Activated CD4-positive, alpha-beta T cell treated with anti-CD3 and anti-CD28 coated beads, Interleukin-2, amount 10 ng/mL, durations not matched to agents 7 days and 5 days (primary cell): ENCODE measurements at regions of chr20 and their contacts with region 1.

Region 1: DNA sequence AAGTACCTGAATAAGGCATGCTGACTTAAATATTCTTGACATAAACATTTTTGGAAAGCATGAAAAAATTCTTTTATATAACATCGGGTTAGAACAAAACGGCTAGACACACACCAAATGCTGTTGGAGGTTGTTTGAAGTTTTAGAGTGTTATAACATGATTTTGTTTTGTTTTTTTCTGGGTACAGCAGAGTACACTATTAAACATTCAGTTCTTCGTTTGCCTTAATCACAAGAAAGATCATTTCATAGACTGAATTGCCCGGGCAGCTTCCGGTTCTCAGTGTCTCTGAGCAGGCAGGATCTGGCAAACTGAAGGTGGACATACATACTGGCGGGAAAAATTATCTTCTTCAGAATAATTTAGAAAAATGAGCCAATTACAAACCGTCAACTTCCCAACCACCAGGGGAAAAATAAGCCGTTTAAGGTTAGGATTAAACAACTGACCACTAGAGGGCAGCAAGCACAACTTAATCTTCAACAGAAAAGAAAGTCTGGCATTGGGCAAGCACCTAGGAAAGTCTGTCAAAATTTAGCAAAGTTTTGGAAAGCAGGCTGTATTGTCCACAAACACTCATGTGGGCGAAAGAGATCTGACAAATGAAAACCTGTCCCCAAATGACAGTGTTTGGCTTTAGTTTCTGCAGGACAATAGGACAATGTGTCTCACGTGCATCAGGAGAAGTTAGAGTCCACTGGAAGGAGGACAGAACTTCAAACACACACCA is 15.0 kb downstream of the ZNF217 start:
- DNase-seq: peak; percentile 83
- H3K4me3 Mint-ChIP-seq: peak overlapping the region; percentile 72
- H3K27ac Mint-ChIP-seq: peak overlapping the region; percentile 70
- H3K4me1 Mint-ChIP-seq: peaks cover 93% of the 10 kb centered on the region
- H3K27me3 Mint-ChIP-seq: no peaks in the 10 kb centered on the region

Region 2: GRCh38 chr20:53555081-53555480 is 23.6 kb before region 1 on chr20:
- CTCF ChIA-PET with region 1: no interaction called
- POLR2A ChIA-PET with region 1: no interaction called
- DNase-seq: no peak
- H3K4me3 Mint-ChIP-seq: no peak overlapping the region
- H3K27ac Mint-ChIP-seq: no peak overlapping the region
- H3K4me1 Mint-ChIP-seq: no peaks in the 10 kb centered on the region
- H3K27me3 Mint-ChIP-seq: no peaks in the 10 kb centered on the region

Region 3: DNA sequence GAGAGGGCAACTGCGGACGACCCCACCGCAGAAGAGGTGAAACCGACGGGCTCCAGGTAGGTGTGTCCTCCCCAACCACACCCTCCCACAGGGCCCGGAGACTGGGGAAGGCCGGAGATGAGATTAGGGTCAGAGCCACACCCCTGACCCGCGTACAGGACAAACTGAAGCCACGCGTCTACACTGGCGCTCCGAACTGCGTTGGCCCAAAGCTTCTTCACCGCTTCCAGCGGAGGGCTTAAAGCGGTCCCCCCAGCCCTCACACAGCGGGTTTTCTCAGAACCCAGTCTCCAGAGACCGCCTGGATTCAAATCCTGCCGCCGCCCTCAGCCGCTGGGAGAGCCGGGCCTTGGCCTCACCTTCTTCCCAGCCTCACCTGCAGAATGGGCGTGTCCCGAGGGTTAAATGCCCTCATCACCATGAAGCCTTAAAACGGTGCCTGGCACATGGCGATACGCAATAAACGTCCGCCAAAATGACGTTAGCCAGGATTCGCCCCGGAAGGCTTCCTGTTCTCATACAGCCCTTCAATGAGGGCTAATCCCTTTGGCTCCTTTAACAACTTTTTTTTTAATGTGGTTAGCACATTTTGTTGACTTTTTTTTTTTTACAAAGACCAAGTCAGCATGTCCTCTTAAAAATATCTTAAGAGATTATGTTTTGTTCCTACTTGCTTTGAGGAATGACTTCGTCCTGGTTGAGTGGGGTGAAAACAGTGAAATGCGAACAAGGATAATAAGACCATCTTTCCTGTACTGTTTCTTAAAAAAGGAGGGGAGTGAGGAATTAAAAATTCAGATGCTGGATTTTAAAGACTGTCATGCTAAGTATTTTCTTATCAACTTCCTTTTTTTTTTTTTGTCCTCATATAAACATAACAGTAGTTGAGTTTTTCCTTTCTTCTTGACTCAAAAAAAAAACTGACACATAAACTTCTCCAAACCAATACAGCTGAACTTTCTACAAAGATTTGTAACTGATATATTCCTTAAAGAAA is 30.1 kb after region 1 on chr20:
- CTCF ChIA-PET with region 1: no interaction called
- POLR2A ChIA-PET with region 1: no interaction called
- DNase-seq: peak; percentile 51
- H3K4me3 Mint-ChIP-seq: peak overlapping the region; percentile 77
- H3K27ac Mint-ChIP-seq: peak overlapping the region; percentile 94
- H3K4me1 Mint-ChIP-seq: peaks cover 55% of the 10 kb centered on the region
- H3K27me3 Mint-ChIP-seq: no peaks in the 10 kb centered on the region

Region 4: DNA sequence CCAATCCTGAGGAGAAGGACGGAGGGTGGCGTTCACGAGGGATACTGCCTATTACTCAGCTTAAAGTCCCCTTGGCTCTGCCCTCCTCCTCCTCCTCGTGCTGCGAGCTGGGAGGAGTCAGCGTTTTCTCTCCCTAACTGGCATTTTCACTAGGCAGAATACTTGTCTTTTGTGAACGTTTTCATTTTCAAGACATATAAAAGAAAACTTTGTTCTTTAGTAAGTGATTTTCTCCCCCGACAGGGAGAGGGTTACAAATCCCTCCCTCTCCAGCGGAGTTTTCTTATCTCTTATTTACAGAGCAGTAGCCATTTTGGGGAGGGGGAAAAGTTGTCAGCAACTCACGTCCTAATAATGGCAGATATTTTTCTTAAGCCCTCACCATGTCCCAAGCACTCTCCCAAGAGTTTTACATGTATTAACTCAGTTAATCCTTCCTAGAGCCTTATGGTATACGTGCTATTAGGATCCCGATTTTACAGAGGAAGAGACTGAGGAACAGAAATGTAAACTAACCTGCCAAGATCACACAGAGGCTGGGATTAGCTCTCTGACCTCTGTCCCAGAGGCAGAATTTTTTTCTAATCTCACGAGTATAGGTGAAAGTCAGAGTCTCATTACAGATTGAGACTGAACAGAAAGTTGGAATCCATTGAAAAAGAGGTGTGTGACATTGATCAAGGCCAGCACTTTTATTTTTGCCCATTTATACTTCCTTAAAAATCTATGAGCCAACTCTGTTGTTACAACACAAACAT is 45.0 kb after region 1 on chr20:
- CTCF ChIA-PET with region 1: no interaction called
- POLR2A ChIA-PET with region 1: no interaction called
- DNase-seq: peak; percentile 43
- H3K4me3 Mint-ChIP-seq: peak overlapping the region; percentile 66
- H3K27ac Mint-ChIP-seq: peak overlapping the region; percentile 98
- H3K4me1 Mint-ChIP-seq: peaks cover 49% of the 10 kb centered on the region
- H3K27me3 Mint-ChIP-seq: no peaks in the 10 kb centered on the region

Region 5: DNA sequence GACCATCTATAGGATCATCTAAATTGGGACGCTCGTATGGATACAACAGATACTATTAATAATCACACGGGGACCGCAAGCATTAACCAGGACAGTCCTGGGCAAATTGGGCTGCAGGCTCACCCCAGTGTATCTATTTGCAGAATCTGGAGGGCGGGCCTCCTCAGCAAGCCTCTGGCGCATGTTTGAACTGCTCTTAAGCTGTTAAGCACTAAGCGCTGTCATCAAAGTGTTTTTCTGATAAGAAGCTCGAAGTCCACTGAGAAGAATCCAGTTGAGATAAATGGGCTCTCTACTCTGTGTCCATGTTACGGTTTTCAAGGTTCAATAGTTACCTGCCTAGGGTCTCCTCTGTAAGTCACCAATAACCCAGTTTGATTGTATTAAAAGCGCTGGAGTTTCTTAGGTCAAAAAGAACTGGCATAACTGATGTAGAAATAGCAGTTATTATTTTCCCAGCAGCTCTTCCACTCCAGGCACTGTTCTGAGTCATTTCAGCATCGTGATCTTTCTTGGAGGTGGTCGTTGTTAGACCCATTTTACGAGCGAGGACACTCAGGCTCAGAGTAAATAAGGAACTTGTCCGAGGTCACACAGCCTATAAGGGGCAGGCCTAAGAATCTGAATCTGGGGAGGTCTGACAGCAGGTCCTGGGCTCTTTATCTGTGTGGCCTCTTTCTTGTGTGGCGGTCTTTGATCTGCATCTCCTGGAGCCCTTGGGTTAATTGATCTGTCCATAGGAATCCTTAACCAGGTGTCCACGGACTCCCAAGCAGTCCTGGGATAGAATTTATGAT is 222.3 kb after region 1 on chr20:
- CTCF ChIA-PET with region 1: no interaction called
- POLR2A ChIA-PET with region 1: interaction called, 11 read pairs
- DNase-seq: no peak
- H3K4me3 Mint-ChIP-seq: no peak overlapping the region
- H3K27ac Mint-ChIP-seq: no peak overlapping the region
- H3K4me1 Mint-ChIP-seq: no peaks in the 10 kb centered on the region
- H3K27me3 Mint-ChIP-seq: no peaks in the 10 kb centered on the region